ENCODE measurements at regions of chr17 and their contacts with region 1.

Region 1: DNA sequence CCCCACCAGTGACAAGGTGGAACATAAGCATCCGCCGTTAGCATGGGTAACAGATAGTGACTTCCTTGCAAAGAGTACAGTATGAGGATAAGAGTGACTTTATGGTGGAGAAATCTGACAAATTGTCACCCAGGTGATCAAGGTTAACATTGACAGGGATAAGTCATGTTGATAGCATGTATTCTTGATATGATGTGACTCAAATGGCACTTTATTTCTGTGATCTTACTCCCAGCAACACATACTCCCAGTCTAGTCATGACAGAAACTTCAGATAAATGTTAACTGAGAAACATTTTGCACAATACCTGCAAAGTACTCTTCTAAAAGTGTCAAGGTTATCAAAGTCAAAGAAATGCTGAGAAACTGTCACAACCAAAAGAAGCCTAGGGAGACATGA is 588.6 kb upstream of the KIF2B start:
- DNase-seq: no peak
- ATAC-seq: no peak
- H3K4me3 ChIP-seq: no peak overlapping the region
- H3K4me3 Mint-ChIP-seq: no peak overlapping the region
- H3K27ac ChIP-seq: no peak overlapping the region
- H3K27ac Mint-ChIP-seq: no peak overlapping the region
- H3K4me1 ChIP-seq: no peaks in the 10 kb centered on the region
- H3K4me1 Mint-ChIP-seq: no peaks in the 10 kb centered on the region
- H3K27me3 ChIP-seq: no peaks in the 10 kb centered on the region
- H3K27me3 Mint-ChIP-seq: no peaks in the 10 kb centered on the region
- CTCF ChIP-seq: no peak

Region 2: GRCh38 chr17:53127331-53127730 is 106.8 kb before region 1 on chr17:
- CTCF ChIA-PET with region 1: no interaction called
- POLR2A ChIA-PET with region 1: no interaction called
- intact Hi-C with region 1: loop called in 1 of 2 experiments (anchors 10 kb)
- DNase-seq: no peak
- ATAC-seq: no peak
- H3K4me3 ChIP-seq: no peak overlapping the region
- H3K4me3 Mint-ChIP-seq: no peak overlapping the region
- H3K27ac ChIP-seq: no peak overlapping the region
- H3K27ac Mint-ChIP-seq: no peak overlapping the region
- H3K4me1 ChIP-seq: no peaks in the 10 kb centered on the region
- H3K4me1 Mint-ChIP-seq: no peaks in the 10 kb centered on the region
- H3K27me3 ChIP-seq: no peaks in the 10 kb centered on the region
- H3K27me3 Mint-ChIP-seq: no peaks in the 10 kb centered on the region
- CTCF ChIP-seq: no peak